Activated CD4-positive, alpha-beta T cell treated with anti-CD3 and anti-CD28 coated beads for 36 hours (primary cell): ENCODE measurements at regions of chr17 and their contacts with region 1.

Region 1: GRCh38 chr17:5706577-5707216 is 122.4 kb upstream of the NLRP1 start:
- DNase-seq: peak; percentile 78
- ATAC-seq: peak; percentile 63
- H3K4me3 Mint-ChIP-seq: no peak overlapping the region
- H3K27ac Mint-ChIP-seq: no peak overlapping the region
- H3K4me1 Mint-ChIP-seq: no peaks in the 10 kb centered on the region
- H3K27me3 Mint-ChIP-seq: peaks cover 12% of the 10 kb centered on the region

Region 2: GRCh38 chr17:4272213-4272971 is 1434.3 kb before region 1 on chr17:
- CTCF ChIA-PET with region 1: no interaction called
- POLR2A ChIA-PET with region 1: no interaction called
- intact Hi-C with region 1: no loop called
- DNase-seq: no peak
- ATAC-seq: no peak
- H3K4me3 Mint-ChIP-seq: no peak overlapping the region
- H3K27ac Mint-ChIP-seq: peak overlapping the region; percentile 28
- H3K4me1 Mint-ChIP-seq: no peaks in the 10 kb centered on the region
- H3K27me3 Mint-ChIP-seq: no peaks in the 10 kb centered on the region

Region 3: DNA sequence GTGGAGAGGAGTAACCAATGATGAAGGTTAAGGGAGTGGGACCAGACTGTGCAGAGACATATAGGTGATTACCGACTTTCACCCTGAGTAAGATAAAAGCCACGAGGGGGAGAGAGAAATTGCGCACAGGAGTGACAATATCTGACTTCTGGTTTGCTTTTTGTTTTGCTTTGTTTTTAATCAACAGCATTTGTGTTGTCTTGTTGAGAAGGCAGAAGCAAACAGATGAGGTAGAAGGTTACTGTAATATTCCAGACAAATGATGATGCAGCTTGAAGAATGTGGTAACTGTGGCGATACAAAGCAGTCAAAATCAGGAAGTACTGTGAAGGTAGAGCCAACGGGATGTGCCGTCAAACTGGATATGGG is 1010.3 kb before region 1 on chr17:
- CTCF ChIA-PET with region 1: no interaction called
- POLR2A ChIA-PET with region 1: no interaction called
- intact Hi-C with region 1: no loop called
- DNase-seq: peak; percentile 38
- ATAC-seq: peak; percentile 95
- H3K4me3 Mint-ChIP-seq: peak overlapping the region; percentile 30
- H3K27ac Mint-ChIP-seq: peak overlapping the region; percentile 92
- H3K4me1 Mint-ChIP-seq: peaks cover 50% of the 10 kb centered on the region
- H3K27me3 Mint-ChIP-seq: no peaks in the 10 kb centered on the region

Region 4: GRCh38 chr17:5584383-5585286 is 122.1 kb before region 1 on chr17 and contains the start of gene NLRP1:
- CTCF ChIA-PET with region 1: interaction called, 22 read pairs
- POLR2A ChIA-PET with region 1: no interaction called
- intact Hi-C with region 1: loop called (anchors 1 kb)
- DNase-seq: peak; percentile 97
- ATAC-seq: peak; percentile 93
- H3K4me3 Mint-ChIP-seq: peak within 1 kb of the TSS; percentile 92
- H3K27ac Mint-ChIP-seq: peak within 1 kb of the TSS; percentile 94
- H3K4me1 Mint-ChIP-seq: peaks cover 62% of the 10 kb centered on the region
- H3K27me3 Mint-ChIP-seq: no peaks in the 10 kb centered on the region
- total RNA-seq, gene NLRP1: 31.2 to 34.0 TPM

Region 5: GRCh38 chr17:5592382-5592781 is 114.3 kb before region 1 on chr17:
- CTCF ChIA-PET with region 1: interaction called, 28 read pairs
- POLR2A ChIA-PET with region 1: no interaction called
- intact Hi-C with region 1: loop called (anchors 1 kb)
- DNase-seq: no peak
- ATAC-seq: no peak
- H3K4me3 Mint-ChIP-seq: no peak overlapping the region
- H3K27ac Mint-ChIP-seq: no peak overlapping the region
- H3K4me1 Mint-ChIP-seq: peaks cover under 1% of the 10 kb centered on the region
- H3K27me3 Mint-ChIP-seq: peaks cover 9% of the 10 kb centered on the region

Region 6: GRCh38 chr17:5694551-5694950 is 12.1 kb before region 1 on chr17:
- CTCF ChIA-PET with region 1: interaction called, 14 read pairs
- POLR2A ChIA-PET with region 1: no interaction called
- intact Hi-C with region 1: no loop called
- DNase-seq: no peak
- ATAC-seq: no peak
- H3K4me3 Mint-ChIP-seq: no peak overlapping the region
- H3K27ac Mint-ChIP-seq: no peak overlapping the region
- H3K4me1 Mint-ChIP-seq: no peaks in the 10 kb centered on the region
- H3K27me3 Mint-ChIP-seq: peaks cover 8% of the 10 kb centered on the region